A549 (cell line): ENCODE measurements at regions of chr5 and their contacts with region 1.

Region 1: GRCh38 chr5:93596676-93597461 is 13.8 kb downstream of the NR2F1 start:
- DNase-seq: peak in 1 of 2 experiments; percentile 32
- ATAC-seq: peak in 1 of 2 experiments; percentile 80; a peak in 3 of 6 replicates
- H3K4me3 ChIP-seq: no peak overlapping the region
- H3K27ac ChIP-seq: no peak overlapping the region
- H3K4me1 ChIP-seq: 0 out of 3 replicates have a peak, but pooled peaks cover 5% of the 10 kb centered on the region
- CTCF ChIP-seq: no peak
- EP300 ChIP-seq: no peak
- POLR2A ChIP-seq: no peak
- RAD21 ChIP-seq: no peak

Region 2: GRCh38 chr5:93479982-93480509 is 116.8 kb before region 1 on chr5:
- CTCF ChIA-PET with region 1: no interaction called
- POLR2A ChIA-PET with region 1: no interaction called
- DNase-seq: no peak
- ATAC-seq: no peak
- H3K4me3 ChIP-seq: no peak overlapping the region
- H3K27ac ChIP-seq: no peak overlapping the region
- H3K4me1 ChIP-seq: no peaks in the 10 kb centered on the region
- CTCF ChIP-seq: no peak
- EP300 ChIP-seq: no peak
- POLR2A ChIP-seq: no peak
- RAD21 ChIP-seq: no peak

Region 3: DNA sequence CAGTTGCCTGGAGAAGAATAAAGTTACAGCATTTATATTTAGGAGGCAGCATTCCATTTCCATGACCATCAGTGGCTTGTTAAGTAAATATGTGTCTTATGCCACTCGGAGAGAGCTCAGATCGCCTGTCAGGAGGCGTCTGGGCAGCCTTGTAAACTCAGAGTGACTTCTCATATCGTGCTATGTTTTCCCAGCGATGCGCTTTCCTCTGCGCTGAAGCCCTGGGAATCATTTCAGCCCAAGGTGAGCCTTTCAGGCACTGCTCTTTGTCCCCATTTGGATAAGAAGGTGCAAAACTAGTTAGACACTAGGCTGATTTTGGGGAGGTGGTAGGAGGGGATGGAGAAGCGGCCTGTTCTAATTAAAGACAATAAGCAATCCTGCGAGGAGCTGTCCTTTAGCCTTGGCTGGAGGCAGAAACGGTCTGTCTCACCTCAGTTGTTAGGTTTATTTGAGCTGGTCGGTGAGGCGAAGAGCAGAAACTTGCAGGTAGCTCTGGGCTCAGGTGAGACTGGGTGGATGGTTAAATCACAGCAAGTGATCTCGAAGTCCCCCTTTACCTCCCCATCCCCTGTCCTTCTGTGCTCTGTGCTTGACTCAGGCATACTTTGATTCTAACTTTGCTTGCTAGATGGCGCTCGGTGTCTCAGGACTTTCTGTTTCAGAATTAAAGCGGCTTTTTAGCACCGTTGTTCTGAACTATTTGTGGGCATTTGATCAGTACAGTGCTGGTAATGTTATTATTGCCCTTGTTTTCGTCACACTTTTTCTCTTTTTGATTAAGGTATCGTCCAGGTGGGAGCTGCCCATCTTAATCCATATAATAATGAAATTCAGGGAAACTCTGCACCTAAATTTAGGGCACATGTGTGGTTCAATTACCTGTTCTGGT is 10.7 kb after region 1 on chr5:
- CTCF ChIA-PET with region 1: interaction called, 15 read pairs
- POLR2A ChIA-PET with region 1: no interaction called
- DNase-seq: peak; percentile 42 to 57
- ATAC-seq: peak; percentile 72 to 86
- H3K4me3 ChIP-seq: peak overlapping the region; percentile 7; the same call in 2 of the 3 replicates
- H3K27ac ChIP-seq: no peak overlapping the region
- H3K4me1 ChIP-seq: peaks cover 15% of the 10 kb centered on the region; the same call in 2 of the 3 replicates
- CTCF ChIP-seq: peak; percentile 76
- EP300 ChIP-seq: no peak
- POLR2A ChIP-seq: no peak
- RAD21 ChIP-seq: peak; percentile 75 to 77

Region 4: DNA sequence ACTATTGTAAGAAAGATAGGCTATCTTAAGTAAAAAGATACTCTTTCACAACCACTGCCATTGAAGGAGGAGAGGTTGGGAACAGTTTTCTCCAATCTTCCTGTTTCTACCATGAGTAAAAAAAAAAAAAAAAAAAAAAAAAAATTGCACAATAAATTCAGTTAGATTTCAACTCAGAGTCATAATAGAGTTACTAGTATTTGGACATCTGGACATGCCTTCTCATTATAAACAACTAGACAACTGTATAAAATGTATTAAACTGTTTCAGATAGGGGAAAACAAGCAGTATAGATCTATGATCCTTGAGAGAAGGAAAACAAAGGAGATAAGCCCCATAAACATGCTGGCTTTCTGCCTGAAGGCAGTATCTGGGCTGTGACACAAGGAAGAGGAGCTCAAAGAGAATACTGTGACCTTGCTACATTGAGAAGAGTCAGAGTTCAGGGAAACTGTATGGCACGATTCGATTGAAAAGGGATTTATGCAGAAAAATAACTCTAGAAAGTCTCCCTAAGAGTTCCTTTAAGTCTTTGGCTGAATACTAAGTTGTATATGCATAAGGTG is 393.7 kb after region 1 on chr5:
- CTCF ChIA-PET with region 1: no interaction called
- POLR2A ChIA-PET with region 1: no interaction called
- DNase-seq: no peak
- ATAC-seq: no peak
- H3K4me3 ChIP-seq: no peak overlapping the region
- H3K27ac ChIP-seq: no peak overlapping the region
- H3K4me1 ChIP-seq: peaks cover 4% of the 10 kb centered on the region; the same call in 1 of the 3 replicates
- CTCF ChIP-seq: no peak
- EP300 ChIP-seq: no peak
- POLR2A ChIP-seq: no peak
- RAD21 ChIP-seq: no peak